ENCODE measurements at regions of chr9 and their contacts with region 1.

Region 1: GRCh38 chr9:120936011-120936763 is 9.6 kb upstream of the TRAF1 start:
- DNase-seq: peak; percentile 95

Region 2: DNA sequence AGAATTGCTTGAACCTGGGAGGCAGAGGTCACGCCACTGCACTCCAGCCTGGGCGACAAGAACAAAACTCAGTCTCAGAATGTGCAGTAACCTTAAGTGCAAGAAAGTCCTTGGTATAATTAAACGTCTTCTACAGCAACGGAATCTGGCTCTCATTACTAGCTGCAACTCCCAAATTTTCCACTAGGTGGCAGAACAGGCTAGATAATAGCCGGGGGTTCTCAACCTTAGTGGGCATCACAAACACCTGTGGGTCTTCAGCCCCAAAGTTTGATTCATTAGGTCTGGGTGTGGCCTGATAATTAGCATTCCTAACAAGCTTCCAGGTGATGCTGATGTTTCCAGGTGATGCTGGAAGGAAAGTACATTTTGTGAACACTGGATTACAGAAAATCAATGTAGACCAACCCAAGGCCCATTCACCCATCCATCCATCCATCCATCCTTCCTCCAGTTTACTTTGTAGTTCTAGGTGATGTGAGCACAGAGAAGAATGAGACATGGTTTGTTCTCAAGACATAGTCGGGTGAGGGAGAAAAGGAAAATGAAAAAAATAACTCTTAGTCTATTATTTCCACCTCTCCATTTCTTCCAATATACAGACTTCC is 180.3 kb before region 1 on chr9:
- intact Hi-C with region 1: loop called (anchors 1 kb)
- DNase-seq: no peak

Region 3: DNA sequence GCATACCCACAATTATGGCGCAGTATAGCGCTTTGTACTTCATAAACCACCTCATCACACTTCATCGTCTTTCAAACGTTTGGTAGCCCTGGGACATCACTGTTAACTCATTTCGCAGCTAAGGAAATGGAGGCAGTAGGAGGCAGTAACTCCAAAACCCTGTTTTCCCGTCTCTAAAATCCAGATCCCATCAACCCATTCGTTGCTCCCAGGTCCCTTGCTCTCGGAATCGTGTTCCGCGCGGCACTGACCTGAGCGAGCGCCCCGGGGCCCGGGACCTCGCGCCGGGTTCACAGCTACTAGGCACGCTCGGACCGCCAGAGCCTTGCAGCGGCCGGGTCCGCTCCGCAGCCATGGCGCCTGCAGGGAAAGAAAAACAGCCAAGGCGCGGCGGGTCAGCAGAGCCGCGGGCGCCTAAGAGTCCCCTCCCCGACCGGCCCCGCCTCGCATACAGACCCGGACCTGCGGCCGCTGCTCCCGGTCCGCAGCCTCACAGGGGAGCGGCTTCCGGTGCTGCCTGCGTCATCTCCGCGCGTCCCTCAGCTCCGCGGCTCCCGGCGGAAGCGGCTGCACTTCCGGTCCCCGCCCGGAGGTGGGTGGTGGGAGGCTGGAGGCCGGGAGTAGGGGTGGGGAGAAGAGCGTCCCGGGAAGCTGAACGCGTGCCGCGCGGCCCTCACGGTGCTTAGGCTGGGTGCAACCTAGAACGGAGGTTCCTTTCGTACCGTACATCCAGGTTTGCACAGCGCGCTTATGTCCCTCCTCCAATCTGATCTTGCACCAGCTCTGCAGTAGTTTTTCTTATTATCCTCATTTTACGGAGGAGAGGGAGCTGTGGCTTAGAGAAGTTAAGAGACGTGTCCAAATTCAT is 143.1 kb before region 1 on chr9 and contains the start of gene FBXW2:
- intact Hi-C with region 1: loop called (anchors 5 kb)
- DNase-seq: peak; percentile 97
- total RNA-seq, gene FBXW2: 46.2 TPM

Region 4: GRCh38 chr9:120868676-120869359 is 67.4 kb before region 1 on chr9:
- intact Hi-C with region 1: loop called (anchors 2 kb)
- DNase-seq: peak; percentile 98

Region 5: DNA sequence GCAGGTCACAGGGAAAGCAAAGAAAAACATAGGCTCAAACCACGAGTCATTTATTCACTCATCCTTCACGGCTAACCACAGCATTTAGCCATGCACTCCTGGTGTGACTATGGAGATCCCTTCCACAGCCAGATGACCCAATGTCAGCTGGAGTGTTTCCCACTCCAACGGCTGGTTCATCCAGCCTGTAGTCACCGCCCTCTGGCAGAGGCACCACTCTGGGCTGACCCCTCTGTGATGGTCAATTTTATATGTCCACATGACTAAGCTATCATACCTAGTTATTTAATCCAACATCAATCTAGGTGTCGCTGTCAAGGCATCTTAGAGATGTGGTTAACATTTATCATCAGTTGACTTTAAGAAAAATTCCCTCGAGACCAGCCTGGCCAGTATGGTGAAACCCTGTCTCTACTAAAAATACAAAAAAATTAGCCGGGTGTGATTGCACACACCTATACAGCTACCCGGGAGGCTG is 49.7 kb before region 1 on chr9:
- intact Hi-C with region 1: no loop called
- DNase-seq: no peak

Region 6: GRCh38 chr9:121074635-121075385 is 138.6 kb after region 1 on chr9 and contains the start of gene CNTRL:
- intact Hi-C with region 1: loop called (anchors 5 kb)
- DNase-seq: peak; percentile 94
- total RNA-seq, gene CNTRL: 4.2 TPM

Region 7: GRCh38 chr9:121246821-121247561 is 310.8 kb after region 1 on chr9:
- intact Hi-C with region 1: no loop called
- DNase-seq: no peak

Measured in cardiac septum (tissue), 1 donor.